Colonic mucosa (tissue), 4 donors: ENCODE measurements at regions of chr2 and their contacts with region 1.

Region 1: GRCh38 chr2:1886405-1886992 is 142.2 kb upstream of the PXDN start:
- DNase-seq: peak; percentile 60
- H3K4me3 ChIP-seq: no peak overlapping the region
- H3K27ac ChIP-seq: no peak overlapping the region
- H3K4me1 ChIP-seq: no peaks in the 10 kb centered on the region
- H3K27me3 ChIP-seq: no peaks in the 10 kb centered on the region
- CTCF ChIP-seq: peak; percentile 59

Region 2: GRCh38 chr2:1742681-1743395 is 143.7 kb before region 1 on chr2:
- intact Hi-C with region 1: no loop called
- DNase-seq: peak; percentile 74
- H3K4me3 ChIP-seq: peak overlapping the region; percentile 35
- H3K27ac ChIP-seq: peak overlapping the region; percentile 67
- H3K4me1 ChIP-seq: no peaks in the 10 kb centered on the region
- H3K27me3 ChIP-seq: peaks cover 10% of the 10 kb centered on the region
- CTCF ChIP-seq: no peak

Region 3: GRCh38 chr2:1769703-1770422 is 116.6 kb before region 1 on chr2:
- intact Hi-C with region 1: no loop called
- DNase-seq: peak; percentile 82
- H3K4me3 ChIP-seq: no peak overlapping the region
- H3K27ac ChIP-seq: no peak overlapping the region
- H3K4me1 ChIP-seq: no peaks in the 10 kb centered on the region
- H3K27me3 ChIP-seq: no peaks in the 10 kb centered on the region
- CTCF ChIP-seq: peak; percentile 81

Region 4: DNA sequence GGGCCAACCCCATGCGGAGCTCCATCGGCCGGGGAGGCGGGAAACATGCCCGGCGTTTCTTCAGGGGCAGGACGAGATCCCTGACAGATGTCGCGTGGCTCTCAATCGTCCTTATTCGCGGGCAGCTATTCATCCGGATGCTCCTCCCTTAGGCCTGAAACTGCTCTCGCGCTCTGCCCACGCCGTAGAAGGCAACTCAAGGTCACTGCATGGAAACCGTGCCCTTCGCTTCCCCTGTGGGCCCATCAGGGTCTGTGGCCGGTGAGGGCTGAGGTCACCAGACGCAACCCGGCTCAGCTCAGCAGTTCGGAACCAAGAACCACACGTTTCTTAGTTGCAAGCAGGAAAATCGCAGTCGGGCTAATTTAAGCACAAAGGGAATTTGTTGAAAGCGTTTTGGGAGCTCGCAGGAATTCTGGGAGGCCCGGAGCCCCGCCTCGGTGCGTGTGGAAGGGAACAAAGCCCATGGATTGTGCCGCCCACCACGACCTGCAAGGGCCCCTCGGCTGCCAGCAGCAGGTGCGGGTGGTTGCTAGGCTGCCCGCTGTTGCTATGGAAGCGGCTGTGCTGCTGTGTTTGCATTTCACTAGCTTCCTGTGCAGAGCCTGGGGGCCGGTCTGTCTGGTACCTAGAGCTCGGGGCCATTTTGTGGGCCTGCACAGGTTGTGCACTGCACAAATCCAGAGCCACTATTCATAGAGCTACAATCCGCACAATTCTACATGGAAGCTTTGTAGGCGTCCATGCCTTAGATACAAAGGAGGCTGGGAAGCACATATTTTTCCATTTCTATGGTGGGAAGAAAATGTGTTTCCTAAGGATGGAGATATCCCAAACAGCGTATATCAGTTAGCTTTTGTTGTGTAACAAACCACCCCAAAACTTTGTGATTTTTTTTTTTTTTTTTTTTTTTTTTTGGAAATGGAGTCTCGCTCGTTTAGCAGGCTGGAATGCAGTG is 1765.5 kb after region 1 on chr2:
- intact Hi-C with region 1: loop called (anchors 10 kb)
- DNase-seq: peak; percentile 54
- H3K4me3 ChIP-seq: peak overlapping the region; percentile 31
- H3K27ac ChIP-seq: no peak overlapping the region
- H3K4me1 ChIP-seq: no peaks in the 10 kb centered on the region
- H3K27me3 ChIP-seq: no peaks in the 10 kb centered on the region
- CTCF ChIP-seq: no peak